ENCODE measurements at regions of chr4 and their contacts with region 1.

Region 1: GRCh38 chr4:128565565-128566186 is 243.8 kb upstream of the JADE1 start:
- DNase-seq: peak; percentile 73 to 74
- H3K4me3 ChIP-seq: no peak overlapping the region
- H3K27ac ChIP-seq: peak overlapping the region in 1 of 3 donors; percentile 34
- H3K4me1 ChIP-seq: peaks cover 21 to 43% of the 10 kb centered on the region in 2 donors
- H3K27me3 ChIP-seq: no peaks in the 10 kb centered on the region
- CTCF ChIP-seq: peak; percentile 25 to 89 (median 74)
- POLR2A ChIP-seq: no peak

Region 2: DNA sequence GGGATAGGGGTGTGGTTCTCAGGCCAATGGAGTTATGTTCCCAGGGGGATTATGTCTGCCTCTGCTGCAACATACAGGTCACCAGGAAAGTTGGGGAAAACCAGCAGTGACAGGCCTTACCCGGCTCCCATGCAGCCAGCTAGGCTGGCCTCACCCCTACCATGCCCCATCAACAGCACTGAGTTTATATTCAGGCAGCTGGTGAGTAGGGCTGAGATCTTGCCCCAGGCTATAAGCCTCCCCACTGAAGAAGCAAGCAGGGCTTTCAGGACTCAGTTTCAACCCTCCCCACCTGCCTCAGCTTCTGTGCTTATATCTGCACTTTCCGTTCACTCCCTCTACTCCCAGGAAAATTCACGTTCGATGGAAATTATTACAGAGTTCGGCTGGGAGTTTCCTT is 155.6 kb before region 1 on chr4:
- intact Hi-C with region 1: no loop called
- DNase-seq: no peak
- H3K4me3 ChIP-seq: no peak overlapping the region
- H3K27ac ChIP-seq: no peak overlapping the region
- H3K4me1 ChIP-seq: no peaks in the 10 kb centered on the region
- H3K27me3 ChIP-seq: no peaks in the 10 kb centered on the region
- CTCF ChIP-seq: no peak
- POLR2A ChIP-seq: no peak

Region 3: DNA sequence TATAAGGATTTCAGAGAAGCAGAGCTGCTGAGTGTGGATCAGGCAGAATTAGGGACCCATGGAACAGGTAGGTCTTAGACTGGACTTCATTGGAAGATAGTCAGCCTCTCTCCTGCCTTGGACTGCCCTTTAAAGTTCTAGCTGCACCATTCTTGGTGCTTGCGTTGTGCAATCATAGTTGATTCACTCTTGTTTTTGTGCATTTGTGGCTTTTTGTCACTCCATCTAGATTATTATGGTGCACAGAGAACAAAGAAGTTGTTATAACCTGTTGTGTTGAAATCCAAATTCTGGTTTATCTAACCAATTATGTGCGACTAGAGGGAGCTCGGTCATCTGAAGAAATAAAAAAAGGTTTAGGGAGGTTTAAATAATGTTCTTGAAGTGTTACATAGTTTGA is 303.1 kb after region 1 on chr4:
- intact Hi-C with region 1: loop called (anchors 5 kb)
- DNase-seq: no peak
- H3K4me3 ChIP-seq: no peak overlapping the region
- H3K27ac ChIP-seq: no peak overlapping the region
- H3K4me1 ChIP-seq: no peaks in the 10 kb centered on the region
- H3K27me3 ChIP-seq: no peaks in the 10 kb centered on the region
- CTCF ChIP-seq: no peak
- POLR2A ChIP-seq: no peak

Measured in thyroid gland (tissue), 4 donors.